Activated T-helper 1 cell treated with anti-CD3 and anti-CD28 coated beads, Interleukin-12 subunit alpha, Interleukin-12 subunit beta, Interleukin-2, Interleukin-4 antibody, amounts not matched to agents 30 ng/mL and 10 ng/mL and 1 ng/mL, durations not matched to agents 14 hours and 24 hours and 36 hours (primary cell): ENCODE measurements at regions of chr5 and their contacts with region 1.

Region 1: GRCh38 chr5:112921833-112922817 is at the start of gene REEP5:
- DNase-seq: peak; percentile 85
- H3K4me3 Mint-ChIP-seq: peak within 1 kb of the TSS; percentile 95
- H3K27ac Mint-ChIP-seq: peak within 1 kb of the TSS; percentile 93
- H3K4me1 Mint-ChIP-seq: peaks cover 62% of the 10 kb centered on the region
- H3K27me3 Mint-ChIP-seq: no peaks in the 10 kb centered on the region
- total RNA-seq, gene REEP5: 77.5 and 77.9 TPM in 2 replicates

Region 2: GRCh38 chr5:112707187-112708102 is 214.7 kb before region 1 on chr5:
- intact Hi-C with region 1: loop called (anchors 1 kb)
- DNase-seq: peak; percentile 96
- H3K4me3 Mint-ChIP-seq: peak overlapping the region; percentile 94
- H3K27ac Mint-ChIP-seq: peak overlapping the region; percentile 81
- H3K4me1 Mint-ChIP-seq: peaks cover 37% of the 10 kb centered on the region
- H3K27me3 Mint-ChIP-seq: peaks cover 8% of the 10 kb centered on the region

Region 3: DNA sequence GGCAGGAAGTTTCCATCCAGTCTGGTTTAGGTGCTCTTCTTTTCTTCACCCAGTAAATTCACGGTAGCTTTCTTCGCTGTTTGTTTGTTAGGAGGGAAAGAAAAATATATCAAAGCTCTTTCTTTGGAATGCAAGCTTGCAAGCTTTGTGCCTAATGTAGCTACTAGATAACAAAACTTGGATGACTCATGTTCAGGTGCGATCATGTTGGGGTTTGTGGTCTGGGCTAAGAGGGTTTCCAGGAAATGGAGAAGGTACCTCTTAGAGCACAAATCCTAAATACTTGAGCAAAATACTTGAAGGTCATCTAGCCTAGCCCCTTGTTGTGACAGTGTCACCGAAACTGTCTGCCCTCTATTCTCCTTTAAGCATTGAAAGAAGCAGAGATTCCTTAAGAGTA is 43.4 kb before region 1 on chr5:
- intact Hi-C with region 1: loop called (anchors 2 kb)
- DNase-seq: peak; percentile 62
- H3K4me3 Mint-ChIP-seq: peak overlapping the region; percentile 31
- H3K27ac Mint-ChIP-seq: peak overlapping the region; percentile 54
- H3K4me1 Mint-ChIP-seq: peaks cover 42% of the 10 kb centered on the region
- H3K27me3 Mint-ChIP-seq: no peaks in the 10 kb centered on the region

Region 4: DNA sequence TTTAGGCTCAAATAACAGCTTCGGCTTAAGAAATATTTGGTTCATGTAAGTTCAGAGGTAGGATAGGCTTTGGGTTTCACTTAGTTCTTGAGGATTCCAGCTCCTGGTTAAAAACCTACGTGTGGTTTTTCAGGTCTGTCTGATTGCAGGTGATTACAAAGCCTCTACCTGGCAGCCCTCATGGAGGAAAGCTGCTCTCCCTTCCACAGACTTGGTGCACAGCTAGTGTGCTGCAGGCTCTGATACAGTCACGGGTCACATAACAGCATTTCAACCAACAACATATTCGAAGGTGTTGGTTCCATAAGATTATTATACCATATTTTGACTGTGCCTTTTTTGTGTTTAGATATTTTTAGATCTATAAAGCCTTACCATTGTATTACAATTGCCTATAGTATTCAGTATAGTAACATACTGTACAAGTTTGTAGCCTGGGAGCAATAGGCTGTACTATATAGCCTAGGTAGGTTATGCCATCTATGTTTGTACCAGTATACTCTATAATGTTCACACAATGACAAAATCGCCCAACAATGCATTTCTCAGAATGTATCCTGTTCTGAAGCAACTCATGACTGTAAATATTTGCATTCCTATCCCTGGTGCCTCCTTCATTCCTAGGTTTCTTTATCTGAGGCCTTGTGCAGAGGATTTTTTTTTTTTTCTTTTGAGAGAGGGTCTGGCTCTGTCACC is 46.4 kb after region 1 on chr5:
- intact Hi-C with region 1: loop called (anchors 1 kb)
- DNase-seq: no peak
- H3K4me3 Mint-ChIP-seq: no peak overlapping the region
- H3K27ac Mint-ChIP-seq: no peak overlapping the region
- H3K4me1 Mint-ChIP-seq: peaks cover 33% of the 10 kb centered on the region
- H3K27me3 Mint-ChIP-seq: no peaks in the 10 kb centered on the region

Region 5: GRCh38 chr5:113022661-113023060 is 100.5 kb after region 1 on chr5:
- intact Hi-C with region 1: loop called (anchors 2 kb)
- DNase-seq: peak; percentile 27
- H3K4me3 Mint-ChIP-seq: peak overlapping the region; percentile 43
- H3K27ac Mint-ChIP-seq: peak overlapping the region; percentile 61
- H3K4me1 Mint-ChIP-seq: peaks cover 62% of the 10 kb centered on the region
- H3K27me3 Mint-ChIP-seq: no peaks in the 10 kb centered on the region

Region 6: DNA sequence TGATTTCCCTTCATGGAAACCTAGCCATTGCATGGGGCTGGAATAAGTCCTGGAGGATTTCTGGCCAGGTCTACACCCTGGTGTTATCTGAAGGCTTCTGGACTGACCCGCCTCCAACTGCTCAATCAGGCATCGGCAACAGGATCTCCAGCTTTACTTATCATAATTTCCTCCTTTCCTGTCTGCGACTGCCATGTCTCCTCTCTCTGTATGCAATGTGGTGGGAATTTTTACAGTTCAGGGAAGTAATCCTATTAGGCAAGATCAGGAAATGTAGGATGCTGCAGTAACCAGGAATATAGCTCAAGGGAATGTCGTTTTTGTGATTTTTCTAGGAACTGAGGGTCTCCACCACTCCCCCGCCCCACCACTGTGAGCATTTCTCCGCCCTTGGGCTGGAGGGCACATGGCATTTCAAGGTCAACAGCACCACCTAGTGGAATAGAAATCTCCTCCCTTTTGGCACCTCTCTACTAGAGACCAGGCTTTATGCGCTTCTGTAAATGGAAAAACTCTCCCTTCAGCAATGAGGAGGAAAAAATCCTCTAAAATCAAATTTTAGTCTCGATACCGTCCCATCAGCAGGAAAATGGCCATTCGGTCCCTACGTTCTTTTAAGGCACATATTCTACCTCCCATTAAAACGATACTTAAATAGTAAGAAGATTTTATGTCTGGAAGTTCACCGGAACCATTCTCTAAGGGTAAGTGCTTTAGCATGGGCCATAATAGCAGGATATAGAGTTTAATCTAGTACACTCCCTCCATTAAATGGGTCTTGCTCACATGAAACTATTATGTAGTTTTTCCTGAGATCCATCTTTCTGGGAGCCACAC is 684.4 kb after region 1 on chr5:
- intact Hi-C with region 1: loop called (anchors 5 kb)
- DNase-seq: peak; percentile 24
- H3K4me3 Mint-ChIP-seq: no peak overlapping the region
- H3K27ac Mint-ChIP-seq: no peak overlapping the region
- H3K4me1 Mint-ChIP-seq: peaks cover 4% of the 10 kb centered on the region
- H3K27me3 Mint-ChIP-seq: peaks cover 22% of the 10 kb centered on the region